ENCODE measurements at regions of chr7 and their contacts with region 1.

Region 1: GRCh38 chr7:55265836-55266642 is 99.1 kb upstream of the LANCL2 start:
- ATAC-seq: no peak
- H3K4me3 ChIP-seq: no peak overlapping the region
- H3K27ac ChIP-seq: no peak overlapping the region
- H3K4me1 ChIP-seq: no peaks in the 10 kb centered on the region

Region 2: DNA sequence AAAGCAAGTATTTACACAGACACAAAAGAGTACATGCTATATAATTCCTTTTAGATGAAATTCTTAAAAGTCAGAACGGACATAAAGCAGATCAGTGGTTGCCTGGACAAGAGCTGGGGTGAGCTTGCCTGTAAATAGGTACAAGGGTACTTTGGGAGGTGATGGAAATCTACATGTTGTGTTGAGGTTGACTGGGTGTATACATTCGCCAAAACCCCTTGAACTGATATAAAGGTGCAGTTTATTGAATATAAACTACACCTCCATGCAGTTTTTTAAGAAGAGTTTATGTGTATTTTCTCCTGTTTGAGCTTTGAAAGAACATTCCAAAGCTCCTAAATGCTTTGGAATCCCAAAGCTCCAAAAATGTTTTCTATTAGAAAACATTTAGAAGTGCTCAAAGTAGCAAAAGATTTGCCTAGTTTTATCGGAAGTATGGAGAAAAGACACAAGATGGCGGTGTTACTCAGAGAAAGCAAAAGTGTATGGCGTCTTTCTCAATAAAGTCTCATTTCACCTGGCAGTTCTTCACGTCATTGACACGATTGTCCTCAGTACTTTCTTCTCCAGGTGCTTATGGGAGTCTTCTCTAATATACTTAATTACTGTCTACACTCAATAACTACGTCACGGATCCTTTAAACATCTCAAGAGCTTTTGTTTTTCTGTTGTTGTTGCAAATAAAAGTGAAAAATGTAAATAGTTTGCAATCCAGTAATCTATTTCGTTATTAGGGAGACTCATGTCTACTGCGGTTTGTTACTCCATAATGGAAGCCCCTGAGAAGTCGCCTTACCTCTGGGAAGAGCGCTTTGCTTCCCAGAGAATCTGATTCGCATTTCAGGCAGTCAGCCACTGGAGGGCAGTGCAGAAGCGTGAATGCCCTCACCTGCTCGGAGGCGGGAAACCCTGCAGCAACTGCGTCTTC is 492.3 kb before region 1 on chr7:
- in situ Hi-C with region 1: loop called in 1 of 9 experiments (anchors 10 kb)
- ATAC-seq: peak; percentile 82 to 99 (median 92)
- H3K4me3 ChIP-seq: peak overlapping the region in 2 of 5 donors; percentile 0 to 6
- H3K27ac ChIP-seq: no peak overlapping the region
- H3K4me1 ChIP-seq: no peaks in the 10 kb centered on the region

Region 3: GRCh38 chr7:54839538-54840213 is 426.4 kb before region 1 on chr7:
- in situ Hi-C with region 1: no loop called
- ATAC-seq: peak in 7 of 8 experiments; percentile 21 to 97 (median 75)
- H3K4me3 ChIP-seq: no peak overlapping the region
- H3K27ac ChIP-seq: no peak overlapping the region
- H3K4me1 ChIP-seq: no peaks in the 10 kb centered on the region

Region 4: DNA sequence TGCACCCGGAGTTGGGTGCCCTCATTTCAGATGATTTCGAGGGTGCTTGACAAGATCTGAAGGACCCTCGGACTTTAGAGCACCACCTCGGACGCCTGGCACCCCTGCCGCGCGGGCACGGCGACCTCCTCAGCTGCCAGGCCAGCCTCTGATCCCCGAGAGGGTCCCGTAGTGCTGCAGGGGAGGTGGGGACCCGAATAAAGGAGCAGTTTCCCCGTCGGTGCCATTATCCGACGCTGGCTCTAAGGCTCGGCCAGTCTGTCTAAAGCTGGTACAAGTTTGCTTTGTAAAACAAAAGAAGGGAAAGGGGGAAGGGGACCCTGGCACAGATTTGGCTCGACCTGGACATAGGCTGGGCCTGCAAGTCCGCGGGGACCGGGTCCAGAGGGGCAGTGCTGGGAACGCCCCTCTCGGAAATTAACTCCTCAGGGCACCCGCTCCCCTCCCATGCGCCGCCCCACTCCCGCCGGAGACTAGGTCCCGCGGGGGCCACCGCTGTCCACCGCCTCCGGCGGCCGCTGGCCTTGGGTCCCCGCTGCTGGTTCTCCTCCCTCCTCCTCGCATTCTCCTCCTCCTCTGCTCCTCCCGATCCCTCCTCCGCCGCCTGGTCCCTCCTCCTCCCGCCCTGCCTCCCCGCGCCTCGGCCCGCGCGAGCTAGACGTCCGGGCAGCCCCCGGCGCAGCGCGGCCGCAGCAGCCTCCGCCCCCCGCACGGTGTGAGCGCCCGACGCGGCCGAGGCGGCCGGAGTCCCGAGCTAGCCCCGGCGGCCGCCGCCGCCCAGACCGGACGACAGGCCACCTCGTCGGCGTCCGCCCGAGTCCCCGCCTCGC is 247.5 kb before region 1 on chr7 and contains the start of gene EGFR:
- in situ Hi-C with region 1: no loop called
- ATAC-seq: peak; percentile 75 to 89 (median 84)
- H3K4me3 ChIP-seq: peak within 1 kb of the TSS; percentile 46 to 86 (median 75)
- H3K27ac ChIP-seq: peak within 1 kb of the TSS in 1 of 2 donors; percentile 43
- H3K4me1 ChIP-seq: peaks cover 0 to 3% of the 10 kb centered on the region in 2 donors
- total RNA-seq, gene EGFR: 0.81 to 22.6 (median 3.6) TPM

Region 5: DNA sequence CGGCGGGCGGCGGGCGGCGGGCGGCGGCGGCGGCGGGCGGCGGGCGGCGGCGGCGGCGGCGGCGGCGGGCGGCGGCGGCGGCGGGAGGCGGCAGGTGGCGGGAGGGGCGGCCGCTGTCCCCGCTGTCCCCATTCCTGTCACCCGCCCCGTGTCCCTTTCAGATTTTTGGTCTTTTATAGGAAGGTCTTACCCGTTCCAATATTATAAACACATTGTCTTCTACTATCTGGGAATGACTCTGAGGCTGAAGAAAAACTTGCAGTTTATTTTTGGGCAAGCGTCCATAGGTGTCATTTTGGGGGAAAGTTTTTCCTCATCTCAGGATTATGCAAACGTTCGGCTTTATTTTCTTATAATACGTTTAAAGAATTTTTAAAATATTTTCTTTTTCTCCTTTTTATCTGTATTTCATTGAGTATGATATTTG is 621.8 kb after region 1 on chr7:
- in situ Hi-C with region 1: no loop called
- ATAC-seq: no peak
- H3K4me3 ChIP-seq: peak overlapping the region; percentile 44 to 85 (median 72)
- H3K27ac ChIP-seq: peak overlapping the region; percentile 78 to 81
- H3K4me1 ChIP-seq: no peaks in the 10 kb centered on the region